WTC11 (cell line): ENCODE measurements at regions of chr11 and their contacts with region 1.

Region 1: DNA sequence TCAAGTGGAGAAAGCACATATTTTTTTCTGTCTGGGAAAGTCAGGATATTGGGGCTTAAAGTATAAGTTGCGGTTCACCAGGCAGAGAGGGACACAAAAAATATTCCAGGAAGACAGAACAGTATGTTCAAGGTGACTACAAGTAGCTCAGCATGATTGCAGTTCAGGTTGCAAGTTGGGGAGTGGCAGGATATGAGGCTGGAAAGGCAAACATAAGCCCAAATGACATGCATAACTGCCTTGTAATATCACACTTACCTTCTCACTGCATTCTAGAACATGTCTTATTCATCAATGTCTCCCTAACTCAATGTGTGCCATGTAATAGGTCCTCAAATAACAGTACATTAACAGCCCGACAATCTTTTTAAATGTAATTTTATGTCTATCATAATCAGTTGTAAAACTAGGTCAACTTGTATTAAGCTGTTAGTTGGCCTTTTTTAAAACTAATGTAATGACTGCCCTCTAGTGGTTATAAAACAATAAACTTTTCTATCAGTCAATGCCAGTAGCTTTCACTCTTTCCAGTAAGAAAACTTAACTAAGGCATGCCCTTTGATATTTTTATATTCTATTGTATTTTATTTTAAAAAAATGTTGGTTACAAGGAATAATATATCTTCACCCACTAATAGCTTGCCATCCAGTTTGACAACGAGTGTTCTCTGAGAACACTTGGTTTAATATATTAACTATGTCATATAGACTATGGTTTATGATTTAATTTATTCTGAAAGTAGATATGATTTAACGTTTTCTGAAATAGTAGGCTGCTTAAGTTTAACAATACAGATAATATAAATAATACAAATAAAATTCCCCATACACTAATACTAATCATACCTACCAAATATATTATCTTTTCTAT is 39.4 kb upstream of the CFAP300 start:
- DNase-seq: no peak
- ATAC-seq: no peak
- H3K4me3 Mint-ChIP-seq: no peak overlapping the region
- H3K27ac Mint-ChIP-seq: no peak overlapping the region
- H3K4me1 Mint-ChIP-seq: peaks cover 6% of the 10 kb centered on the region
- H3K27me3 Mint-ChIP-seq: no peaks in the 10 kb centered on the region; the same call in 1 of the 2 replicates
- CTCF ChIP-seq: peak; percentile 34

Region 2: DNA sequence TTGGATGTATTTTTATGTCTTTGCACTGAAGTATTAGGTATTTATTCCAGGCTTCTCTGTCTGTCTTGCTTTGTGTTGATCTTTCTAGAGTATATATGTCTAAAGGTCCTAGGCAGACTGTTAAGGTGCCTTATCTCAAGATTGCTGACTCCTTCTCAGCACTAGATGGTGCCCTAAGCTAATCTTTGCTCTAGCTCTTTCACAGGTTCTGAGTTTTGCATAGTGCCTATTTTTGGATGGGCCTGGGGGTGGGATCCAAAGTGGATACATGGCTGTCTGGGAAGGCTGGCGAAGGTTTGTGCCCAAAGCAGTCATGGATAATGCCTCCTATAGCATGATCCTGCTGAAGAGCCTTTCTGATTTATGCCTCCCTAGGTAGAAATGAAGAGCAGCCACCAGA is 578.9 kb before region 1 on chr11:
- CTCF ChIA-PET with region 1: interaction called, 13 read pairs
- POLR2A ChIA-PET with region 1: no interaction called
- DNase-seq: no peak
- ATAC-seq: peak; percentile 89
- H3K4me3 Mint-ChIP-seq: no peak overlapping the region
- H3K27ac Mint-ChIP-seq: no peak overlapping the region
- H3K4me1 Mint-ChIP-seq: peaks cover 29% of the 10 kb centered on the region
- H3K27me3 Mint-ChIP-seq: no peaks in the 10 kb centered on the region
- CTCF ChIP-seq: no peak

Region 3: GRCh38 chr11:101860696-101861427 is 146.9 kb before region 1 on chr11:
- CTCF ChIA-PET with region 1: interaction called, 116 read pairs
- POLR2A ChIA-PET with region 1: no interaction called
- DNase-seq: peak; percentile 27
- ATAC-seq: peak; percentile 98
- H3K4me3 Mint-ChIP-seq: no peak overlapping the region
- H3K27ac Mint-ChIP-seq: no peak overlapping the region
- H3K4me1 Mint-ChIP-seq: peaks cover 12% of the 10 kb centered on the region; the same call in 1 of the 2 replicates
- H3K27me3 Mint-ChIP-seq: no peaks in the 10 kb centered on the region
- CTCF ChIP-seq: peak; percentile 38; the same call in 1 of the 2 replicates

Region 4: DNA sequence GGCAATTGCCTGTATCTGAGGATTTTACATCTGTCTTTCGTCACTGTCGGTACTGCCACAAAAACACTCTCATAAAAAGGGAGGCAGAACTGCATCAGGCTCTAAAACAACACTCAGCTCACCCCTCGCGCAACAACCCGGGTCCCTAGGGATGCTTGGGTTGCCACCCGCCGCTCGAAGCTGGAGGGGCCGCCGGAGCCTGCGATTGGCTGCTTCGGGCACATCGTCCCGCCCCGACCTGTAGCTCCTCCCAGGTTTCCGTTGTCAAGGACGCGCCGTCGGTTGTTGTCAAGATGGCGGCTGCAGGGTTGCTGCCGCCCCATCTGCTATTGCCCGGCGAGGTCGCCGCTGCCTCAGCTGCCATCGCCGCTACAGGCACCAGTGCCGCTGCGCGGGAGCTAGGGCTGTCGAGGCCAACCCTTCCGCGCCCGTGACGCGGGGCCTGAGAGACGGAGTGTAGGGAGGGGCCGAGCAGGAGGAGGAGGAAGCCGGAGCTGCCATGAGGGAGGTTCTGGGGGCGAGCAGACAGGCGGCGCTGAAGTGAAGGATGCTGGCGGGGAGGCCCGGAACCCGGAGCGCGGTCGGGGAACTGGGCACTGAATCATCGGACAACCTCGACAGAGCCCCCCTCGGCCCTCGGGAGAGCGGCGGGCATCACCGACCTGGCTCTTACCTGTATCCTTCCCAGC is 92.9 kb before region 1 on chr11 and contains the start of gene CEP126:
- CTCF ChIA-PET with region 1: interaction called, 16 read pairs
- POLR2A ChIA-PET with region 1: no interaction called
- DNase-seq: peak; percentile 97
- ATAC-seq: peak; percentile 93
- H3K4me3 Mint-ChIP-seq: peak within 1 kb of the TSS; percentile 93
- H3K27ac Mint-ChIP-seq: peak within 1 kb of the TSS; percentile 76
- H3K4me1 Mint-ChIP-seq: peaks cover 36% of the 10 kb centered on the region
- H3K27me3 Mint-ChIP-seq: no peaks in the 10 kb centered on the region; the same call in 1 of the 2 replicates
- CTCF ChIP-seq: no peak
- total RNA-seq, gene CEP126: 1.9 to 2.4 TPM (median 2.0 TPM) in 3 replicates

Region 5: GRCh38 chr11:101944923-101945322 is 62.9 kb before region 1 on chr11:
- CTCF ChIA-PET with region 1: interaction called, 10 read pairs
- POLR2A ChIA-PET with region 1: no interaction called
- DNase-seq: no peak
- ATAC-seq: no peak
- H3K4me3 Mint-ChIP-seq: no peak overlapping the region
- H3K27ac Mint-ChIP-seq: no peak overlapping the region
- H3K4me1 Mint-ChIP-seq: no peaks in the 10 kb centered on the region
- H3K27me3 Mint-ChIP-seq: no peaks in the 10 kb centered on the region
- CTCF ChIP-seq: no peak